Sigmoid colon (tissue), 7 donors: ENCODE measurements at regions of chr5 and their contacts with region 1.

Region 1: DNA sequence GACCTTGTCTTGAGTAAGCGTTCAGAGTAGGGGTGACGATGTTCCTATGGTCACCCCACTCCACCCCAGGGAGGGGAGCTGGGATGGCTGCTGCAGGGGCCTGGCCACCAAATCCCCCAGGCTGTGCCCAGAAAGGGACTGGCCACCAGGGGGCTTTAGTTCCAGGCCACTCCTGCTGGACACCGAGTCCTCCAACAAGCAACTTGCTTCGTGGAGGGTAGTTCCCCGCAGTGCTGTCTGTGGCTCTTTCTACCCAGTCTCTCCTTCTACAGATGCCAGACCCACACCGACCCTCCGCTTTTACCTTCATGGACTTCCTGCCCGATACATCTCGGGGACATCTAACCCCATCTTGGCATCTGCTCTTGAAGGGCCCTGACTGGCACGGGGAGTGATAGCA is 35.7 kb upstream of the GABRP start:
- DNase-seq: no peak
- H3K4me3 ChIP-seq: no peak overlapping the region
- H3K27ac ChIP-seq: no peak overlapping the region
- H3K4me1 ChIP-seq: peaks cover 0 to 53% (median 50%) of the 10 kb centered on the region in 4 donors
- H3K27me3 ChIP-seq: no peaks in the 10 kb centered on the region
- CTCF ChIP-seq: no peak
- EP300 ChIP-seq: no peak
- POLR2A ChIP-seq: no peak

Region 2: DNA sequence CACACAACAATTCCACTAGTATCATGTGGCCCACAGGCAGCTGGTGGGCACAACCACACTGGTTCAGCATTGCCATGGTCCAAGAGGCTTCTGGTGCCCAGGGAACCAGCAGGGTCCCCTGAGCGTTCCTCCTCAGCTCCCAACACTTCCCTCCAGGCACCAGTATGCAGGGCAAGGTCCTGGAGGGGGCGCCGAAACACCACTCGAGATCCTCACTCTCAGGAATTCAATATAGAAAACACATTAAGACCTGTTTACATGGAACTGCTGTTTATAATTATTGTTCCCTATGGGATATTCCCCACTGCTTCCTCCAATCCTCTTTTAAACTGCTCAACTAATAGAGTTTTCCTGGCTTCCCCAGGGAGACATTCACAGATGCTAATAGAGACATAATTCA is 56.2 kb before region 1 on chr5:
- intact Hi-C with region 1: no loop called
- DNase-seq: no peak
- H3K4me3 ChIP-seq: no peak overlapping the region
- H3K27ac ChIP-seq: no peak overlapping the region
- H3K4me1 ChIP-seq: no peaks in the 10 kb centered on the region
- H3K27me3 ChIP-seq: peaks cover 0 to 18% (median 0%) of the 10 kb centered on the region in 3 donors
- CTCF ChIP-seq: no peak
- EP300 ChIP-seq: no peak
- POLR2A ChIP-seq: no peak

Region 3: GRCh38 chr5:170791325-170791954 is 43.6 kb after region 1 on chr5:
- intact Hi-C with region 1: loop called (anchors 1 kb)
- DNase-seq: no peak
- H3K4me3 ChIP-seq: no peak overlapping the region
- H3K27ac ChIP-seq: no peak overlapping the region
- H3K4me1 ChIP-seq: peaks cover 0 to 4% (median 0%) of the 10 kb centered on the region in 4 donors
- H3K27me3 ChIP-seq: no peaks in the 10 kb centered on the region
- CTCF ChIP-seq: peak; percentile 27 to 62 (median 53)
- EP300 ChIP-seq: no peak
- POLR2A ChIP-seq: no peak

Region 4: GRCh38 chr5:171342362-171343111 is 594.7 kb after region 1 on chr5:
- intact Hi-C with region 1: loop called (anchors 5 kb)
- DNase-seq: no peak
- H3K4me3 ChIP-seq: no peak overlapping the region
- H3K27ac ChIP-seq: no peak overlapping the region
- H3K4me1 ChIP-seq: no peaks in the 10 kb centered on the region
- H3K27me3 ChIP-seq: peaks cover 0 to 16% (median 0%) of the 10 kb centered on the region in 3 donors
- CTCF ChIP-seq: peak in 3 of 4 experiments; percentile 21 to 27 (median 22)
- EP300 ChIP-seq: no peak
- POLR2A ChIP-seq: no peak